PC-9 (cell line): ENCODE measurements at regions of chr1 and their contacts with region 1.

Region 1: DNA sequence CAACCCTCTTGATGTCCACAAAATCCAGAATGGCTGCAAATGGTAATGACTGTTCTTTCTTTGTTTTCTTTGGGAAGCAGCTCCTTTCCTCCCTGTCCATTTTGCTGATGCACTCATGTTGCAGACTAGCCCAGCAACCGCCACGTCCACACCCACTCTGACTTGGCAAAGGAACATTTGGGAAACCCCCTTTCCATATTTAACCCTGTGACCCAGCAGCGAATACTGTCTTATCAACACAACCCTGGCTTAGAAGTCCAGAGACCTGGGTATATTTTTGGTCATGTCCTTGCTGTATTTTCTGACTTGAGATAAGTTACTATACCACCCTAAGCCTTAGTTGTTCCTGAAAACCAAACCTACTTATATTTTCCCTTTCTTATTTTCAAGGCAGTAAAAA is 18.1 kb upstream of the SHE start:
- DNase-seq: no peak
- H3K4me3 ChIP-seq: no peak overlapping the region
- H3K27ac ChIP-seq: no peak overlapping the region
- H3K4me1 ChIP-seq: peaks cover 7% of the 10 kb centered on the region; the same call in 1 of the 2 replicates
- H3K27me3 ChIP-seq: peaks cover 63% of the 10 kb centered on the region
- CTCF ChIP-seq: no peak

Region 2: DNA sequence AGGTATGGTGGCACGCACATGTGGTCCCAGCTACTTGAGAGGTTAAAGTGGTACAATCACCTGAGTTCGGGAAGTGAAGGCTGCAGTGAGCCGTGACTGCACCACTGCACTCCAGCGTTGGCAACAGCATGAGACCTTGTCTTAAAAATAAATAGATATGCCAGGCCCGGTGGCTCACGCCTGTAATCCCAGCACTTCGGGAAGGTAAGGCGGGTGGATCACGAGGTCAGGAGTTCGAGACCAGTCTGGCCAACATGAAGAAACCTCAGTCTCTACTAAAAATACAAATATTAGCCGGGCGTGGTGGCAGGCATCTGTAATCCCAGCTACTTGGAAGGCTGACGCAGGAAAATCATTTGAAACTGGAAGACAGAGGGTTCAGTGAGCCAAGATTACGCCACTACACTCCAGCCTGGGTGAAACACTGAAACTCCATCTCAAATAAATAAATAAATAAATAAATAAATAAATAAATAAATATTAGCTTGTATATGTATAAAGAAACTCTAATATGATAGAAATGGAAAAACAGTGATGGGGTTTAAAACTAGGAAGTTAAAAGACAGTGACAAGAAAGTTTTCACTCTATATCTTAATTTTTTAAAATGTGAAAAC is 616.4 kb before region 1 on chr1:
- CTCF ChIA-PET with region 1: interaction called, 13 read pairs
- POLR2A ChIA-PET with region 1: no interaction called
- intact Hi-C with region 1: no loop called
- DNase-seq: no peak
- H3K4me3 ChIP-seq: no peak overlapping the region
- H3K27ac ChIP-seq: no peak overlapping the region
- H3K4me1 ChIP-seq: no peaks in the 10 kb centered on the region; the same call in 1 of the 2 replicates
- H3K27me3 ChIP-seq: no peaks in the 10 kb centered on the region
- CTCF ChIP-seq: no peak